Endothelial cell of umbilical vein (primary cell): ENCODE measurements at regions of chr17 and their contacts with region 1.

Region 1: GRCh38 chr17:64020056-64020766 is at the start of gene ICAM2:
- DNase-seq: peak; percentile 71
- H3K4me3 ChIP-seq: peak within 1 kb of the TSS; percentile 49 to 63 (median 54)
- H3K27ac ChIP-seq: peak within 1 kb of the TSS; percentile 94
- H3K4me1 ChIP-seq: peaks cover 67% of the 10 kb centered on the region
- H3K27me3 ChIP-seq: no peaks in the 10 kb centered on the region
- CTCF ChIP-seq: no peak
- POLR2A ChIP-seq: peak; percentile 48
- total RNA-seq, gene ICAM2: 514 and 586 TPM in 2 replicates

Region 2: DNA sequence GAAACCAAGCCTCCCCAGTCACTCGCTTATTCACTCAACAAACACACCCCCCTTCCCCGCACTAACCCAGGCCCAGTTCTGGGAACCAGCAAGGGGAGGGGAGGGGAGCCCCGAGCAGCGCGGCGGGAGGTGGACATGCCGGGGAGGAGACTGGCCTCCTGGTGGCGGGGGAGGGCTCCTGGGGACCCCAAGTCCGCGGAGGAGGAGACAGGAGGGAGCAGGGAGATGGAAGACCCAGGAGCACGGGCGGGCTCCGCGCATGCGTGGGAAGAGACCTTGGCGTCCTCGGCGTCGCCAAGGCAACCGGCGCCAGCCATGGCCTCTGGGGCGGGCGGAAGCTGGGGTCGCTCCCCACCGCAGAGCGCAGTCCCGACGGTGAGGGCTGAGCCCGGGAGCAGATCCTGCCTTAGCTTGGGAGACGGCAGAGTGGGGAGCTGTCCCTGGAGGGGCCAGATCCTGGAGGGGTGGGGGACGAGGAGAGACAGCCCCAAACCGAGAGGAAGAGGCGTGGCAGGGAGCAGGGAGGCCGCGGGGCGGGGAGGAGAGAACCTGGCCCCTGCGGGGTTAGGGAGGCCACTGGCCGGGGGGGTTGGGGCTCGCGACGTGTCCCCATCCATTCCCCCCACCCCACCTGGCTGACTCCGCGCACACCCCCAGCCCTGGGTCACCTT is 22.0 kb before region 1 on chr17 and contains the start of gene PRR29:
- CTCF ChIA-PET with region 1: interaction called, 140 read pairs
- POLR2A ChIA-PET with region 1: interaction called, 13 read pairs
- dilution Hi-C with region 1: no loop called
- intact Hi-C with region 1: loop called (anchors 1 kb)
- DNase-seq: peak; percentile 71
- H3K4me3 ChIP-seq: peak within 1 kb of the TSS; percentile 12 to 59 (median 37)
- H3K27ac ChIP-seq: peak within 1 kb of the TSS; percentile 23
- H3K4me1 ChIP-seq: peaks cover 42% of the 10 kb centered on the region
- H3K27me3 ChIP-seq: no peaks in the 10 kb centered on the region
- CTCF ChIP-seq: no peak
- POLR2A ChIP-seq: no peak
- total RNA-seq, gene PRR29: 0.78 and 1.2 TPM in 2 replicates

Region 3: GRCh38 chr17:64005734-64006167 is 14.5 kb before region 1 on chr17:
- CTCF ChIA-PET with region 1: interaction called, 140 read pairs
- POLR2A ChIA-PET with region 1: interaction called, 32 read pairs
- dilution Hi-C with region 1: no loop called
- intact Hi-C with region 1: loop called (anchors 1 kb)
- DNase-seq: peak; percentile 64
- H3K4me3 ChIP-seq: peak overlapping the region; percentile 66 to 87 (median 73)
- H3K27ac ChIP-seq: peak overlapping the region; percentile 91
- H3K4me1 ChIP-seq: peaks cover 85% of the 10 kb centered on the region
- H3K27me3 ChIP-seq: no peaks in the 10 kb centered on the region
- CTCF ChIP-seq: no peak
- POLR2A ChIP-seq: no peak